ENCODE measurements at regions of chr2 and their contacts with region 1.

Region 1: DNA sequence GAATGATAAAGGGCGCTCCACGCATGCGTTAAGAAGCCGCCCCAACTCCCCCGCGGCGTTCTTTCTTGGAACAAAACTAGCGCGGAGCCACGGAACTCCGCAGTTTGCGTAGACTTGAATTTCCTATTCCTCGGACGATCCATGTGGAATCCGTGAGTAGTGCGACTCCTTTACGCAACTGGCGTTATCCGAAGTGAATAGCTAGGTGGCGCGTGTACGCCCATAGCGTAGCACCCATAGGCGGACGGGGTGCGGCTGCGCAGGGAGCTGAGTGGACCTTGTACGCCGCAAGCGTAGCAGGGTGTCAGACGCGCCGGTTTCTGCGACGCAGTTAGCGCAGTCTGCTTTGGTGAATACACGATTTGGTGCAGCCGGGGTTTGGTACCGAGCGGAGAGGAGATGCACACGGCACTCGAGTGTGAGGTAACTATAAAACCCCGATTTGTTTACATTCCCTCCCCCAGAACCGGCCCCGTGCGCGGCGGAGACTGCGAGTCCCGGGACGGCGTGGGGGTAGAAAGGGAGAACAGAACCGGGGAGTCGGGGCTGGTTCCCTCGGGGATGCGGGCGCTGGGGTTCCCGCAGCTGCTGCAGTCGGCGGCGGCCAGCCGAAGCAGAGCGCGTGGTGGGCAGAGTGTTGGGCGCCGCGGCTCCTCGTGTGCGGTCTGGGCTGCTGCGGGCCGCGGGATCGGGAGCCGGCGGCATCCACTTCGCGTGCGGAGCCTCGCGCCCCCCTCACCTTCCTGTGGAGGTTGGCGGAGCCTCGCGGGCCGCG is at the start of gene SLC39A10:
- DNase-seq: peak; percentile 98
- H3K4me3 Mint-ChIP-seq: peak within 1 kb of the TSS; percentile 99
- H3K27ac Mint-ChIP-seq: peak within 1 kb of the TSS; percentile 99
- H3K4me1 Mint-ChIP-seq: peaks cover 26% of the 10 kb centered on the region
- H3K27me3 Mint-ChIP-seq: peaks cover 2% of the 10 kb centered on the region
- total RNA-seq, gene SLC39A10: 37.4 to 41.0 TPM

Region 2: DNA sequence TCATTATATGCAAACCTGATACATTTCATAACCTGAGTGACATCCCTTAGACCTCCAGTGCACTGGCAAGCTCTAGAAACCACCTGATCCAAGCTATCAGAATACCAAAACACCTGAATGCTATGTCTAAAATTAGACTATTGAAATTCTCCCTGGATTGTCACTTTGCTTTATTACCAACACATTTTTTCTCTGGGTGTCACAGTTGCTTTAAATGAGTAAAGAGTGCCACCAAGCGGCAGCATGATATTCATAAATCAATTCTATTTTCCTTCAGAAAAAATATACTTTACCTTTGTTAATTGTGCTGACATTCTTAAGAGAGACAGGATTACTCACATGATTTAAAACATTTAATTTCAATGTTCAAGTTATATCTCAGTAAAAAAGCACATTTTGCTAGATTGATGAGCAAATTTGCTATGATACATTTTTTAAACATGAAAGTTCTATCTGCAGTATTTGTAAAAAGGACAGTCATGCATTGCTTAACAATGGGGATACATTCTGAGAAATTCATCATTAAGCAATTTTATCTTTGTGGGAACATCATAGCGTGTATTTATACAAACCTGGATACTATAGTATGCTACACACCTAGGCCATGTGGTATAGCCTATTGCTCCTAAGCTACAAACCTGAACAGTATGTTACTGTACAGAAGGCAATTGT is 338.5 kb before region 1 on chr2:
- CTCF ChIA-PET with region 1: interaction called, 10 read pairs
- intact Hi-C with region 1: loop called (anchors 1 kb)
- DNase-seq: peak; percentile 69
- H3K4me3 Mint-ChIP-seq: no peak overlapping the region
- H3K27ac Mint-ChIP-seq: no peak overlapping the region
- H3K4me1 Mint-ChIP-seq: peaks cover 10% of the 10 kb centered on the region
- H3K27me3 Mint-ChIP-seq: no peaks in the 10 kb centered on the region

Region 3: GRCh38 chr2:195392446-195393336 is 264.4 kb before region 1 on chr2:
- CTCF ChIA-PET with region 1: no interaction called
- intact Hi-C with region 1: no loop called
- DNase-seq: no peak
- H3K4me3 Mint-ChIP-seq: no peak overlapping the region
- H3K27ac Mint-ChIP-seq: no peak overlapping the region
- H3K4me1 Mint-ChIP-seq: no peaks in the 10 kb centered on the region
- H3K27me3 Mint-ChIP-seq: no peaks in the 10 kb centered on the region

Region 4: GRCh38 chr2:195442458-195443175 is 214.4 kb before region 1 on chr2:
- CTCF ChIA-PET with region 1: no interaction called
- intact Hi-C with region 1: loop called (anchors 1 kb)
- DNase-seq: peak; percentile 19
- H3K4me3 Mint-ChIP-seq: no peak overlapping the region
- H3K27ac Mint-ChIP-seq: peak overlapping the region; percentile 18
- H3K4me1 Mint-ChIP-seq: peaks cover 8% of the 10 kb centered on the region
- H3K27me3 Mint-ChIP-seq: no peaks in the 10 kb centered on the region

Region 5: DNA sequence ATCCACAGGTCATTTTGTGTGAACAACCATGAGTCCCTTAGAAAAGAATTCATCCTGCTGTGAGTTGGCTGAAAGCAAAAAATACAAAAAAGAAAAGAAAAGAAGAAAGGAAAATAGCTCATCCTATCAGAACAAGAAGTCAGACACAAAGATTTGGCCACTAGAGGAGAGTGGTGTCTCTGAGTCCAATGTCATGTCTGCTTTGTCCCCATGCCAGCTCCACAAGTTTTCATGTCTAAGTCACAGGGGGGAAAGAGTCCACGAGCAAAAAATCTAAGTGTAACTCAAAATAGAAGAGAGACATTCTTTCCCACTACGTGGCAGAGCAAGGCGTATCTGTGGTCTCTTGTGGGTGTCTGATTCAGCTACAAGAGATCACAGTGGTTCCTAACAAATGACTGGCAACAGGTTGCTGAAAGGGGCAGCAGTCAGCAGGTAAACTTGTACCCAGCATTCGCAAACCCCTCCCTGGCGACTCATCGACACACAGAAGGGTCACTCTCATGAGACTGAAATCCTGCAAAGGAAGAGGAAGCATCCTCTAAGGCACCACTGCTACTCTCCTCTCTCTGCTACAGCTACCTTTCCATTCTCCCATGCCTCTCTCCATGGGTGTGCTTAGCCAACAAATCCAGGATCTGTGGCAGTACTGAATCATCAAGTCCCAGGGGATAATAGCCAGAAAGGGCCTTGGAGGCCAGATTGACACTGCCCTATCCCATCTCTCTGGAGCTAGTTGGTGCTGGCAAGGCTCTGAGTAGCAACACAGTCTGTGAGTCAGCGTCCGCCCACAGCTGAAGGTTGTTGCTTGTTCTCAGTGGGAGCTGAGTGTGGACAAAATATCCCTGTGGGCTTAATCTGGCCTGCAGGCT is 123.0 kb before region 1 on chr2:
- CTCF ChIA-PET with region 1: interaction called, 28 read pairs
- intact Hi-C with region 1: loop called (anchors 1 kb)
- DNase-seq: peak; percentile 85
- H3K4me3 Mint-ChIP-seq: peak overlapping the region; percentile 75
- H3K27ac Mint-ChIP-seq: peak overlapping the region; percentile 98
- H3K4me1 Mint-ChIP-seq: peaks cover 79% of the 10 kb centered on the region
- H3K27me3 Mint-ChIP-seq: no peaks in the 10 kb centered on the region

Region 6: DNA sequence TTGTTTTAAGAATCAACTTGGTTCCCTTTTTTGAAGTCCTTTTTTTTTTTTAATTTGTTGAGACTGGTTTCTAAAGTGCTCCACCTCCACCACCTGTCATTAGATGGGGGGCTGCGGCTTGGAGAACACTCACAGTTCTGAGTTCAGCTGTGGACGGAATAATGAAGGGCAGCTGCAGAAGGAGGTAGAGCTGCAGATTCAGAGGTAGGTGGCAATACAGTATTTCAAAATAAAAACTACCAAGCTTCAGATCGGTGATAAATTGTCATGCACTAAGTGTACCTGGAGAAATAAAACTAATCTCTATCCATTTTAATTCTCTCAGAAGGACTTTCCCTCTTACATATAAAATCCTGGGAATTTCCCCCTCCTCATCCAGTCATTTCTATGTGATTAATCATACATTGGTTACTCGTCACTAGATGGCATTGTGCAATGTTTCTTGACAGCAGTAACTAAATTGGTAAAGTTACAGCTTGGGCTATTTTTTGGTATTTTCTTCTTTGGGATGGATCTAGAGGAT is 81.1 kb before region 1 on chr2:
- CTCF ChIA-PET with region 1: interaction called, 51 read pairs
- intact Hi-C with region 1: loop called (anchors 1 kb)
- DNase-seq: peak; percentile 32
- H3K4me3 Mint-ChIP-seq: peak overlapping the region; percentile 37
- H3K27ac Mint-ChIP-seq: peak overlapping the region; percentile 78
- H3K4me1 Mint-ChIP-seq: peaks cover 77% of the 10 kb centered on the region
- H3K27me3 Mint-ChIP-seq: no peaks in the 10 kb centered on the region

Region 7: DNA sequence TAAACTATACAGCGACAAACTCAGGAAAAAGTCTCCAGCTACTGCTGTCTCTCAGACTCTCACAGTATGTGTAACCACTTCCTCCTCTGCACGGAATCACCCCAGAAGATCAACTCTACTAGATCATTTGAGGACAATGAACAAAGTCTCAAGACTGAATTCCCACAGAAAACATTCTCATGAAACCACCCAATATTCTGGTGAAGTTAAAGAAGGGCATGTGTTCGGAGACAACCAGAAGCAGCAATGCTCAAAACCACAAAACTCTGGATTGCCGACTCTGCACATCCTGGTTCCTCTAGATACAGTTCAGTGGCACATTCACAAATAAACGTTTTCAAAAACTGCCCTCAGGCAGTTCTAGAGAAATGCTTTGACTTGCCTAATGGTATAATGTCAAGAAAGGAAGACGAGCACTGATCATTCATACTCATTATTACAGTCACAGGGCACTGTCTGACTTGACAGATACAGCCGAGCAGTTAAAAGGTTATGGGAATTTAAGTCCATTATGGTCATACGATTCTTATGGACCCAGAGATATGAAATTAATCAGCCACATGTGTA is 606.2 kb after region 1 on chr2:
- CTCF ChIA-PET with region 1: no interaction called
- intact Hi-C with region 1: loop called (anchors 1 kb)
- DNase-seq: peak; percentile 61
- H3K4me3 Mint-ChIP-seq: peak overlapping the region; percentile 70
- H3K27ac Mint-ChIP-seq: peak overlapping the region; percentile 97
- H3K4me1 Mint-ChIP-seq: peaks cover 80% of the 10 kb centered on the region
- H3K27me3 Mint-ChIP-seq: no peaks in the 10 kb centered on the region

Measured in activated naive CD4-positive, alpha-beta T cell treated with anti-CD3 and anti-CD28 coated beads for 36 hours (primary cell).